GM12878 (cell line): ENCODE measurements at regions of chr1 and their contacts with region 1.

Region 1: GRCh38 chr1:212699104-212699624 is 476 bp downstream of the BATF3 start:
- DNase-seq: no peak
- ATAC-seq: peak; percentile 81
- H3K4me3 ChIP-seq: peak overlapping the region; percentile 82
- H3K27ac ChIP-seq: no peak overlapping the region
- H3K4me1 ChIP-seq: peaks cover 27% of the 10 kb centered on the region
- H3K27me3 ChIP-seq: no peaks in the 10 kb centered on the region
- CTCF ChIP-seq: peak; percentile 48 to 79 (median 71)
- EP300 ChIP-seq: no peak
- POLR2A ChIP-seq: no peak
- RAD21 ChIP-seq: peak; percentile 51

Region 2: DNA sequence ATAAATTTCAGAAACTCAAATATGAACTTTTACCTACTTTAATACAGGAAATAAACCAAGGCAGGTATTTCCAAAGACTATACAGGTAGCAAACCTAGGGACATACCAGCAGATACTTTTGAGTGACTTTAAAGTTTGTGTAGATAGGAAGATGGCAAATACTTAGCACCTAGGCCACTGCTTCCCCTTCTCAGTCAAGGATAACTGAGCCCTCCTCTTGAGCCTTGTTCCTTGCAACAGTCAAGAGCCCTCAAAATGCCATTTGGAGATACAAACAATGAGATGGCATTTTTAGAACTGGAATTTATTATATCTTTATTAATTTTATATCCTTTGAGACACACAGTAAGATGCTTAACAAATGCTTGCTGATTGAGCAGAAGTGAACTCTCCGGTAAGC is 934.5 kb before region 1 on chr1:
- CTCF ChIA-PET with region 1: no interaction called
- POLR2A ChIA-PET with region 1: no interaction called
- RAD21 ChIA-PET with region 1: no interaction called
- SMC1A ChIA-PET with region 1: no interaction called
- in situ Hi-C with region 1: no loop called
- intact Hi-C with region 1: no loop called
- DNase-seq: no peak
- ATAC-seq: no peak
- H3K4me3 ChIP-seq: no peak overlapping the region
- H3K27ac ChIP-seq: no peak overlapping the region
- H3K4me1 ChIP-seq: no peaks in the 10 kb centered on the region
- H3K27me3 ChIP-seq: no peaks in the 10 kb centered on the region
- CTCF ChIP-seq: no peak
- EP300 ChIP-seq: no peak
- POLR2A ChIP-seq: no peak
- RAD21 ChIP-seq: no peak

Region 3: GRCh38 chr1:212671342-212672031 is 27.7 kb before region 1 on chr1:
- CTCF ChIA-PET with region 1: interaction called, 91 read pairs
- POLR2A ChIA-PET with region 1: interaction called, 29 read pairs
- RAD21 ChIA-PET with region 1: interaction called, 21 read pairs
- SMC1A ChIA-PET with region 1: interaction called, 64 read pairs
- in situ Hi-C with region 1: no loop called
- intact Hi-C with region 1: no loop called
- DNase-seq: no peak
- ATAC-seq: peak; percentile 65
- H3K4me3 ChIP-seq: no peak overlapping the region
- H3K27ac ChIP-seq: no peak overlapping the region
- H3K4me1 ChIP-seq: peaks cover 34% of the 10 kb centered on the region
- H3K27me3 ChIP-seq: no peaks in the 10 kb centered on the region
- CTCF ChIP-seq: no peak
- EP300 ChIP-seq: no peak
- POLR2A ChIP-seq: no peak
- RAD21 ChIP-seq: no peak

Region 4: GRCh38 chr1:212683357-212683722 is 15.8 kb before region 1 on chr1:
- CTCF ChIA-PET with region 1: interaction called, 27 read pairs
- POLR2A ChIA-PET with region 1: interaction called, 29 read pairs
- RAD21 ChIA-PET with region 1: interaction called, 21 read pairs
- SMC1A ChIA-PET with region 1: interaction called, 25 read pairs
- in situ Hi-C with region 1: no loop called
- intact Hi-C with region 1: loop called (anchors 1 kb)
- DNase-seq: peak; percentile 81
- ATAC-seq: peak; percentile 79
- H3K4me3 ChIP-seq: peak overlapping the region; percentile 33; the same call in 1 of the 2 replicates
- H3K27ac ChIP-seq: peak overlapping the region; percentile 90
- H3K4me1 ChIP-seq: peaks cover 62% of the 10 kb centered on the region
- H3K27me3 ChIP-seq: no peaks in the 10 kb centered on the region
- CTCF ChIP-seq: no peak
- EP300 ChIP-seq: peak in 1 of 2 experiments; percentile 52; a peak in 1 of 4 replicates
- POLR2A ChIP-seq: peak; percentile 80
- RAD21 ChIP-seq: no peak

Region 5: DNA sequence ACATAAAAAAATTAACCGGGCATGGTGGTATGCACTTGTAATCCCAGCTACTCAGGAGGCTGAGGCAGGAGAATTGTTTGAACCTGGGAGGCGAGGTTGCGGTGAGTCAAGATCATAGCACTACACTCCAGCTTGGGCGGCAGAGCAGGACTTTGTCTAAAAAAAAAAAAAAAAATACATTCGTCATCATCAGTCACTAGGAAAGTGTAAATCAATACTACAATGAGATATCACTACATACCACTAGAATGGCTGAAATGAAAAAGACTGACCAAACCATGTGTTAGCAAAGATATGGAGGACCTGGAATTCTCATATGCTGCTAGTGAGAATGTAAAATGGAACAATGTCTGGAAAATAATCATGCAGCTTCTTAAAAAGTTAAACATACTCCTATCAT is 139.0 kb after region 1 on chr1:
- CTCF ChIA-PET with region 1: no interaction called
- POLR2A ChIA-PET with region 1: no interaction called
- RAD21 ChIA-PET with region 1: no interaction called
- SMC1A ChIA-PET with region 1: no interaction called
- in situ Hi-C with region 1: no loop called
- intact Hi-C with region 1: no loop called
- DNase-seq: no peak
- ATAC-seq: no peak
- H3K4me3 ChIP-seq: no peak overlapping the region
- H3K27ac ChIP-seq: no peak overlapping the region
- H3K4me1 ChIP-seq: peaks cover 12% of the 10 kb centered on the region
- H3K27me3 ChIP-seq: no peaks in the 10 kb centered on the region
- CTCF ChIP-seq: no peak
- EP300 ChIP-seq: no peak
- POLR2A ChIP-seq: no peak
- RAD21 ChIP-seq: no peak

Region 6: GRCh38 chr1:213148905-213149304 is 449.7 kb after region 1 on chr1:
- CTCF ChIA-PET with region 1: no interaction called
- POLR2A ChIA-PET with region 1: no interaction called
- RAD21 ChIA-PET with region 1: no interaction called
- SMC1A ChIA-PET with region 1: no interaction called
- in situ Hi-C with region 1: no loop called
- intact Hi-C with region 1: no loop called
- DNase-seq: no peak
- ATAC-seq: no peak
- H3K4me3 ChIP-seq: no peak overlapping the region
- H3K27ac ChIP-seq: no peak overlapping the region
- H3K4me1 ChIP-seq: no peaks in the 10 kb centered on the region
- H3K27me3 ChIP-seq: no peaks in the 10 kb centered on the region
- CTCF ChIP-seq: no peak
- EP300 ChIP-seq: no peak
- POLR2A ChIP-seq: no peak
- RAD21 ChIP-seq: no peak